PC-3 (cell line): ENCODE measurements at regions of chr12 and their contacts with region 1.

Region 1: GRCh38 chr12:12661086-12661485 is 34.9 kb downstream of the GPR19 start:
- DNase-seq: peak; percentile 36
- ATAC-seq: no peak
- H3K4me3 ChIP-seq: no peak overlapping the region
- H3K27ac ChIP-seq: no peak overlapping the region
- H3K4me1 ChIP-seq: no peaks in the 10 kb centered on the region
- H3K27me3 ChIP-seq: no peaks in the 10 kb centered on the region
- CTCF ChIP-seq: no peak

Region 2: DNA sequence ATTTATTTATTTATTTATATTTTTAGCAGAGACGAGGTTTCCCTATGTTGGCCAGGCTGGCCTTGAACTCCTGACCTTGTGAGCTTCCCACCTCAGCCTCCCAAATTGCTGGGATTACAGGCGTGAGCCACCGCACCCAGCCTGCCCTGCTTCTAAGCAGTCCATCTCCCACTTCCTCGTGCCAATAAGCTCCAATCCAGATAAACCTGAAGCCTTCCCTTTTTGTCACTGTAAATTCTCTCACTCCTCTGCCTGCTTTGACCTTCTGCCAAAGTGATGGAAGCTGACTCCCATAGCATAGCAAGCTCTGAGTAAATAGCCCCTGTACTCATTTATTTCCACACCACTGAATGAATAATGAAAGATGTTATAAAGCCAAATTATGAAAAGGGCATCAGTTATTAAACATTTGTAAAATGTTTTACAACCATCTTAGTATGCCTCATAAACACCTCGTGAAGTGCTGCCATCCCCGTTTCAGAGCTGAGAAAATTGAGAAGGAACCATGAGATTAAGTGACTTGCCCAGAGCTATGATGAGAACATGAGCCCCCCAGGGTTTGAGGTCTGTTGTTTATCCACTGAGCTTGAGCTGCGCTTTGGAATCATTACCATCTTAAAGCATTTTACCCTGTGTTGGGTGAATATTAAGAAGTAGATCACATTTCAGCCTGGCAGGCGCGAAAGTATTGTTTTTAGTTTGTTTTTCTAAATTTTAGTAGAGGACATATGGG is 341.5 kb before region 1 on chr12:
- CTCF ChIA-PET with region 1: no interaction called
- POLR2A ChIA-PET with region 1: no interaction called
- intact Hi-C with region 1: no loop called
- DNase-seq: no peak
- ATAC-seq: peak; percentile 38
- H3K4me3 ChIP-seq: no peak overlapping the region
- H3K27ac ChIP-seq: no peak overlapping the region
- H3K4me1 ChIP-seq: no peaks in the 10 kb centered on the region
- H3K27me3 ChIP-seq: no peaks in the 10 kb centered on the region
- CTCF ChIP-seq: no peak

Region 3: GRCh38 chr12:12357719-12358461 is 303.2 kb before region 1 on chr12:
- CTCF ChIA-PET with region 1: interaction called, 11 read pairs
- POLR2A ChIA-PET with region 1: no interaction called
- intact Hi-C with region 1: no loop called
- DNase-seq: no peak
- ATAC-seq: no peak
- H3K4me3 ChIP-seq: peak overlapping the region; percentile 91
- H3K27ac ChIP-seq: peak overlapping the region; percentile 86
- H3K4me1 ChIP-seq: peaks cover 11% of the 10 kb centered on the region; the same call in 1 of the 2 replicates
- H3K27me3 ChIP-seq: no peaks in the 10 kb centered on the region
- CTCF ChIP-seq: no peak